AG04449 (cell line): ENCODE measurements at regions of chr3 and their contacts with region 1.

Region 1: DNA sequence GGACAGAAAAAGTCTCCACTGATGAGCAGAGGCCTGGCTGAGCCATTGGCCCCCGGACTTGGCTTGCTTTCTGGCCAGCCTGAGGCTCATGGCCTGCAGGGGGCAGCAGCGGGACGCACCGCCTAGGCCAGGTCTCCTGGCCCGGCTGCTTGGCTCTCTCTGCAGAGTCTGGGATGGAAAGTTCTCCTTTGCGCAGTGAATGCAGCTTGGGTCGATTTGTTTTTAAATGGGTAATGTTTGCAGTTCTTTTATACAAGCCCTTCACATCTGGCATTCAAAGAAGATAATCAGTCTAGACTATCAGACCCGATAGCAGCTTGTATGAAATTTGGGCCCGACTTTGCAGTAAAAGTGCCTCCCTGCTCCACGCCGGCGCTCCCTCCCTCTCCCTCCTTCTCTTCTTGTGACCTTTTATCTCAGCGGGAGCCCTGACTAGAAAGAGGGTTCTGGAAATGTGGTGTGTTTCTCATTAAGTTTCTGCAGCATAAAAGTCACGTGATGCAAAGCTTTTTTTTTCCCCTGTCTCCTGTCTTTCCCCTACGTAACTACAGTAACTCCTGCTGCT is 59.9 kb downstream of the ZNF621 start:
- DNase-seq: peak; percentile 23
- H3K4me3 ChIP-seq: no peak overlapping the region; the same call in 1 of the 2 replicates
- CTCF ChIP-seq: peak; percentile 99

Region 2: GRCh38 chr3:40329071-40329470 is 255.6 kb before region 1 on chr3:
- CTCF ChIA-PET with region 1: interaction called, 35 read pairs
- POLR2A ChIA-PET with region 1: no interaction called
- DNase-seq: no peak
- H3K4me3 ChIP-seq: no peak overlapping the region
- CTCF ChIP-seq: no peak

Region 3: GRCh38 chr3:40574661-40575060 is 10.0 kb before region 1 on chr3:
- CTCF ChIA-PET with region 1: interaction called, 19 read pairs
- POLR2A ChIA-PET with region 1: no interaction called
- DNase-seq: no peak
- H3K4me3 ChIP-seq: no peak overlapping the region
- CTCF ChIP-seq: no peak

Region 4: DNA sequence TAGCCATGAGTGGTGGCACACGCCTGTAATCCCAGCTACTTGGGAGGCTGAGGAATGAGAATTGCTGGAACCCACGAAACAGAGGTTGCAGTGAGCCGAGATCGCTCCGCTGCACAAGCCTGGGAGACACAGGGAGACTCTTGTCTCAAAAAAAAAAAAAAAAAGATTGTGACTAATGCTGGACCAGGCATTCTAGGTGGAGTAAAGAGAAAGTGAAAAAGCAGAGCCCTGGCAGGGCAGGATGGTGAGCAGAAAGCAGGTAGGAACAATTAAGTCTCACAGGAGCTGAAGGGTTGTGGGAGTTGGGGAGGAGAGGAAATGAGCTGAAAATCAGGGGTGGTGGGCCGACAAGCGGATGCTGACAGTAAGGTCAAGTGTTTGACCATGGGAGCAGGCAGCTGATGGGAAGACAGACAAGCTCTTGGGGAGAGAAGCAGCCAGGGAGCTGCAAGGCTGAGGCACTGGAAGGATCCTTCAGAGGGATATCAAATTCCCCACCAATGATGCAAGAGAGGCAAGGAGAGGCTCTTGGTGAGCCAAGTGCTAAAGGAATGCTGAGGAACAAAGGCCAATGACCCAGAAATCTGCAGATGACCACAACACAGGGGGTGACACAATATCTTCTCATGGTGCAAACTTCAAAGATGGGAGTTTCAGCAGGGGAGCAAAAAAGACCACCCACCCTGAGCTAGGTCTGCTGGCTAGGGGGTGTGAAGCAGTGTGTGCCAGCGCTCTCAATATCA is 1126.1 kb after region 1 on chr3:
- CTCF ChIA-PET with region 1: interaction called, 18 read pairs
- POLR2A ChIA-PET with region 1: no interaction called
- DNase-seq: peak; percentile 55
- H3K4me3 ChIP-seq: no peak overlapping the region
- CTCF ChIP-seq: no peak

Region 5: DNA sequence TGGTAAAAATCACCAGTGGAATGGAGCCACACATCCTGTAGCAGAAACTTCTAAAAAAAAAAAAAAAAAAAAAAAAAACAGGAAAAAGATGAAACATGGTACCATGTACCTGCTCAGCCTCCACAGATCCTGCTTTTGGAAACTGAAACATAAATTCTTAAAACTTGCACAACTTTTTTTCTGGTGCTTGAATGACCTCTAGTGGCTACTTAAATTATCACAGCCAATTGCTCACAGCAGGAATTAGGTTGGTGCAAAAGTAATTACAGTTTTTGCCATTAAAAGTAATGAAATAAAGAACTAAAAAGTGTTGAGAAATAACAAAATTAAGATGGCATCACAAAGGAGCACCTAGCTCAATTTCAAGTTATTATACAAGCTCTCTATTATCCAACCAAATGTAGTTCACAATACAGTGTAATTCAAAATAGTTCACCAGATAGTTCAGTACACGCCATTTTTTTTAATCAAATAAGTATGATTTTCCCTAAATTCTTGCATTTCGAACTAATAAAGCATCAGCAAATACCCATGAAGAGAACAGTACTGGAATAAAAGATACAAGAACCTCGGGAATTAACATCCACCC is 1296.6 kb after region 1 on chr3:
- CTCF ChIA-PET with region 1: interaction called, 297 read pairs
- POLR2A ChIA-PET with region 1: no interaction called
- DNase-seq: no peak
- H3K4me3 ChIP-seq: no peak overlapping the region
- CTCF ChIP-seq: peak; percentile 44